ENCODE measurements at regions of chr21 and their contacts with region 1.

Region 1: DNA sequence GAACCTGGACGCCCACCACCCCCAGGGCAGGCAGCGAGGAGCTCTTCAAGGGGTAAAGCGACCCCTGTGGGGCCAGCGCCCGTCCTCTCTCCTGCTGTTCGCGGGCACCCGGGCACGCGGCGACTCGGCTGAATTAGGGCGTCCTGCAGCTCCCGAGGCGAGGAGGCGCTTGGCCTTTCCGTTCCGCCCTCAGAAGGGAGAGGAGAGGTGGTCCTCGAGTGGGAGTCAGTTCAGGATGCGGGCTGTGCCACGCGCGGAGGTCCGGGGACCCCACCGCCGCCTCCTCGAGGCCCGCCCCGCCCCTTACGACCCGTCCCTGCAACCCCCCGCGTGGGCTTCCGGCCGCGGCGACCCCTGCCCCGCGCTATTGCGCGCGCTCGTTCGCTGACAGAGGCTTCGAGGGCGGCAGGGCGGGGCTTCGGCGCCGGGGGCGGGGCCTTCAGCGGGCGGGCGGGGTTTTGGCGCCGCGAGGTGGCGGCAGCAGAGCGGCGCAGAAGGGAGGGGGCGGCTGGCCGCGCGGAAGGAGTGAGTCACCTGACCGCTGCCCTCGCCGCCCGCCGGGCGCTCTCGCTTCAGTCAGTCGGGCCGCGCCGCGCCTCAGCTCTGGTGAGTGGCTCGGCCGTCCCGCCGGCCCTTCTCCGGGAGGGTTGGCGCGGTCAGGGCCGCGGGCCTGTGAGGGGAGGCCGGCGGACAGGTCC is at the start of gene BACH1:
- DNase-seq: peak; percentile 86
- ATAC-seq: peak; percentile 51
- H3K4me3 Mint-ChIP-seq: peak within 1 kb of the TSS; percentile 97
- H3K27ac Mint-ChIP-seq: peak within 1 kb of the TSS; percentile 99
- H3K4me1 Mint-ChIP-seq: peaks cover 74% of the 10 kb centered on the region
- H3K27me3 Mint-ChIP-seq: no peaks in the 10 kb centered on the region
- CTCF ChIP-seq: no peak
- total RNA-seq, gene BACH1: 141 and 152 TPM in 2 replicates

Region 2: DNA sequence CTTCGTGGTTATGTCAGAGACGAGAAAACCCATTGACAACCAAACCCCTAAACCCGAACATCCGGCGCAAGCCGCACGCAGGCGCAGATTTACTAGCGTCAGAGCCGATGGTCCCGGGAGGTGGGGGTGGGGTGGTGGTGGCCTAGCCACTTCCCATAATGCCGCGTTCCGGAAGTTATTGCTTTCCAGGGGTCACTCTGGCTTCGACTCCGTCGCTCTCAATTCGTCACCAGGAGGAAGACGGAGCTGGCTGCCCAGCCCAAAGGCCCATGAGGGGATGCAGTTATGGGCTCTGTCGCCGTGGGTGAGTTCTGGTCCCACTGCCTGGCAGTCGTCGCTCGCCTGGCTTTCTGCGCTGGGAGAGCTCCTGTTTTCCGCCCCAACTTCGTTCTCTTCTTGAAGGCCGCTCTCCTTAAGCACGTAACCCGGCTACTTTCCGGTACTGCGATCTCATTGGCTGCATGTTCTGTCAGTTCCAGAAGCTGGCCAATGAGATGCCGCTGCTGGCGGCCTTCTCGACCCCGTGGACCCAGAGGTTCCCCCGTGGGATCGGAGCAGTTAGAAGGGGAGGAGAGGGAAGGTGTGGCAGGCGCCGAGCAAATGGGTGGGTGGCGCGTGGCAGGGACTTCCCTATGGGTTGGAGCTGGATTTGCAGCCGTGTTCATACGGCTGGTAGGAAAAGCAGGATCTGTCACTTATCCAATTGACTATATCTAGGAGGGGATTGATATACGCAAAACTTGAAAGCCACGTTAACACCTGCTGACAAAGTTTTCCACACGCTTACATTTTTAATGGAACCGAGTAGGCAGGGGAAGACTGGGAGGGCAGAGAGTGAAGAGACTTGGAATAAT is 273.8 kb before region 1 on chr21 and contains the start of gene USP16:
- CTCF ChIA-PET with region 1: no interaction called
- POLR2A ChIA-PET with region 1: interaction called, 14 read pairs
- intact Hi-C with region 1: loop called (anchors 1 kb)
- DNase-seq: peak; percentile 94
- ATAC-seq: peak; percentile 93
- H3K4me3 Mint-ChIP-seq: peak within 1 kb of the TSS; percentile 98
- H3K27ac Mint-ChIP-seq: peak within 1 kb of the TSS; percentile 98
- H3K4me1 Mint-ChIP-seq: peaks cover 45% of the 10 kb centered on the region
- H3K27me3 Mint-ChIP-seq: no peaks in the 10 kb centered on the region
- CTCF ChIP-seq: no peak
- total RNA-seq, gene USP16: 53.2 and 54.6 TPM in 2 replicates

Region 3: GRCh38 chr21:29096218-29097015 is 202.1 kb before region 1 on chr21:
- CTCF ChIA-PET with region 1: interaction called, 4 read pairs
- POLR2A ChIA-PET with region 1: interaction called, 18 read pairs
- intact Hi-C with region 1: loop called (anchors 1 kb)
- DNase-seq: no peak
- ATAC-seq: no peak
- H3K4me3 Mint-ChIP-seq: no peak overlapping the region
- H3K27ac Mint-ChIP-seq: no peak overlapping the region
- H3K4me1 Mint-ChIP-seq: peaks cover 11% of the 10 kb centered on the region
- H3K27me3 Mint-ChIP-seq: no peaks in the 10 kb centered on the region
- CTCF ChIP-seq: no peak

Region 4: DNA sequence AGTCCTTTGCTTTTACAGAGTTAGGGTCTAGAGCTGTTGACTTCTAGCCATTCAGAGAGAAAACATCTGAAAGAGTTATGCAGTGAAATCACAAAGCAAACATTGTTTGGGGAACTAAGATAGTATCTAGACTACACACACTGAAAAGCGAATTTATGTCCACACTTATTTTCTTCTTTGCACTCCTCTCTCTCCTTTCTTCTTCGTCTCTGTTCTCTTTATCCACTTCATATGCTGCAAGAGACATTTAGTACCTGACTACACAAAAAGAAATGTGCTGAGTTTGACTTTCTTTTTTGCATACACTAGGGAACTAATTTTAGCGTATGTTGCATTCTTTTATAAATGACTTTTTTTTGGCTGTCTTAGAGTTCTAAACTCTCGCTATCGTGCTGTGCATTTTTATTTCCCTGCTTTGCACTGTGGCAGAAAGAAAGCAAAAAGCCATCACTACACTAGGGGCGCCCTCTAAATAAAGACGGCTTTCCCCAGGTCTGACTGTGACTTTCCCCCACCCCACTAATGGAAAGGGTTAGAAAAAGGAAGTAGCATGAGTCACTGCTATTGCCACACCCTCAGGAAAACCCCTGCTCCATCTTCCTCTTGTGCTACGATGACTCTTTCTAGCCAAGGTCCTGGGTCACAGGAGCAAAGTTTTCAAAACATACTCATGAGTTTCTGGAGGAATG is 102.4 kb before region 1 on chr21:
- CTCF ChIA-PET with region 1: interaction called, 6 read pairs
- POLR2A ChIA-PET with region 1: interaction called, 22 read pairs
- intact Hi-C with region 1: loop called (anchors 1 kb)
- DNase-seq: peak; percentile 33
- ATAC-seq: peak; percentile 97
- H3K4me3 Mint-ChIP-seq: peak overlapping the region; percentile 80
- H3K27ac Mint-ChIP-seq: peak overlapping the region; percentile 97
- H3K4me1 Mint-ChIP-seq: peaks cover 40% of the 10 kb centered on the region
- H3K27me3 Mint-ChIP-seq: no peaks in the 10 kb centered on the region
- CTCF ChIP-seq: peak; percentile 23

Region 5: DNA sequence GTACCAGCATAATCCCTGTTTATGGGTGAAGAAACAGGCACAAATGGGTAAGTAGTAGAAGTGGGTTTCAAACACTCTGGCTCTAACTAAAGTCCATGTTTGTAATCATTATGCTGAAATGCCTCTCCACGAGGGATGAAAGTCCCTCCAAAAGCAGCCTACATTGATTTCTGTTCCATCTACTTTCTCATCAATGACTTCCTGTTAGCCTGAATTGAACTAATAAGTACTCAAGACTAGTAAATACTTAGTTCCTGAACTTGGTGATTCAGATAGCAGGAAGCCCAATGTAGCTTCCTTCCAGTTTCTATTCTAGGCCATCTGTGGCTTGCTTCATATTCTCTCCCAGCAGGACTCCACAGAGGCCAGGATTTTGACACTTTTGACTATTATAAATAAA is 11.1 kb before region 1 on chr21:
- CTCF ChIA-PET with region 1: no interaction called
- POLR2A ChIA-PET with region 1: interaction called, 21 read pairs
- intact Hi-C with region 1: no loop called
- DNase-seq: no peak
- ATAC-seq: peak; percentile 34
- H3K4me3 Mint-ChIP-seq: no peak overlapping the region
- H3K27ac Mint-ChIP-seq: peak overlapping the region; percentile 46
- H3K4me1 Mint-ChIP-seq: peaks cover 19% of the 10 kb centered on the region
- H3K27me3 Mint-ChIP-seq: no peaks in the 10 kb centered on the region
- CTCF ChIP-seq: no peak